ENCODE measurements at regions of chr16 and their contacts with region 1.

Region 1: DNA sequence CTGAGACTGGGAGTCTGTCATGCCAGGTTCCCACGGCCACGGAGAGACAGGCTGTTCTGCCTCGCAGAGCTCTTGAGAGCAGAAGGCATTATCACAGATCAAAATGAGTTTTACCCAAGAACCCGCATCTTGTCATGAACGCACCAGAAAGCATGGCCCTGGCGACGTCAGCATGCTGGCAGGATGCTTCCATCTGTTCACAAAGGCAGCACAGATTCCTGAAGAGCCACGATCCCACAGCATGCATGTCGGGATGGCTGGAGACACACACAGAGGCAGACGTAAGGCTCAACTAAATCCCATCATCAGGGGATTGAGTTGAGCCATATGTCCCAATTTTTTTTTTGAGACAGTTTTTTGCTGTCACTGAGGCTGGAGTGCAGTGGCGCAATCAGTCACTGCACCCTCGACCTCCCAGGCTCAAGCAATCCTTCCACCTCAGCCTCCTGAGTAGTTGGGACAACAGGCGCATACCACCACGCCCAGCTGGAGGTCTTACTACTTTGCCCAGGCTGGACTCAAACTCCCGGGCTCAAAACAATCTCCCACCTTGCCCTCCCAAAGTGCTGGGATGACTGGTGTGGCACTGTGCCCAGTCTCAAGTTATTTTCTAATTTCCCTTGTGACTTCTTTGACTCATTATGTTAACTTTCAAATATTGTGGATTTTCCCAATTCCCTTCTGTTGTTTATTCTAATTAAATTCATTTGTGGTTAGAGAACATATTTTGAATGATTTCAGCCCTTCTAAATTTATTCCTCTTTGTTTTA is 11.1 kb downstream of the FANCA start:
- DNase-seq: no peak
- ATAC-seq: no peak; the same call in 2 of the 3 replicates
- H3K4me3 ChIP-seq: no peak overlapping the region
- H3K27ac ChIP-seq: no peak overlapping the region
- H3K4me1 ChIP-seq: peaks cover 0 to 6% of the 10 kb centered on the region in 2 experiments; a peak in 3 of 5 replicates
- H3K27me3 ChIP-seq: no peaks in the 10 kb centered on the region
- CTCF ChIP-seq: no peak
- EP300 ChIP-seq: no peak
- POLR2A ChIP-seq: no peak
- RAD21 ChIP-seq: no peak

Region 2: DNA sequence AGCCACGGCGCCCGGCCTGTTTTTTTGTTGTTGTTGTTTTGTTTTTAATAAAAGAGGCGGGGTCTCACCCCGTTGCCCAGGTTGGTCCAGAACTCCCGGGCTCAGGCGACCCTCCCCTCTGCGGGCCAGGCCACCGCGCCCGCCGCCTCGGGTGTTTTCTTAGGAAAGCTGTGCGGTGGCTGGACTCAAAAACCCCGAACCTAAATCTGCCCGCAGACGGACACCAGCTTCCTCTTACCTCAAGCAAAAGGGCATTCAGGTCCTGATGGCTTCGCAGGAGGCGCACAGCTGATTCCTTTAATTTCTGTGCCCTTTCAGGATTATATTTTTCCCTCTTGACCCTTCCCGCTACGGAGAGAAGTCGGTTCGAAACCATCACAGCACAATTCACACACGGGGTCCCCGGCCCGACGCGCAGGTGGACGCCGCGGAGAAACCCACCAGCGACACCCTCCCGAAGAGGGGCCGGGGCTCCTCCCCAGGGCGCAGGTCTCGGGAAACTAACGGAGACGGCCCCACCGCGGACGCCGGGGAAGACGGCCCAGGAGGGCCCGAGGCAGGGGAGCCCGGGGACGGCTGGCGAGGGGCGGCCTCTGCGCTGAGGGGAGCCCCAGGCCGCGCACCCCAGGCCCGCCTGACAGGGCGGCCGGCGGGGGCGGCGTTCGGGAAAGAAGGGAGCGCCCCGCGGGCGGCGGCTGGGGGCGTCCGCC is 10.5 kb after region 1 on chr16:
- CTCF ChIA-PET with region 1: no interaction called
- POLR2A ChIA-PET with region 1: interaction called, 10 read pairs
- in situ Hi-C with region 1: no loop called
- intact Hi-C with region 1: no loop called
- DNase-seq: peak in 2 of 4 experiments; percentile 36 to 47
- ATAC-seq: peak; percentile 3
- H3K4me3 ChIP-seq: peak overlapping the region; percentile 75
- H3K27ac ChIP-seq: peak overlapping the region; percentile 85
- H3K4me1 ChIP-seq: peaks cover 11 to 41% of the 10 kb centered on the region in 2 experiments; a peak in 4 of 5 replicates
- H3K27me3 ChIP-seq: no peaks in the 10 kb centered on the region
- CTCF ChIP-seq: no peak
- EP300 ChIP-seq: no peak
- POLR2A ChIP-seq: no peak
- RAD21 ChIP-seq: no peak

Region 3: GRCh38 chr16:89873972-89874689 is 68.8 kb after region 1 on chr16:
- CTCF ChIA-PET with region 1: no interaction called
- POLR2A ChIA-PET with region 1: interaction called, 3 read pairs
- in situ Hi-C with region 1: loop called (anchors 5 kb)
- intact Hi-C with region 1: no loop called
- DNase-seq: peak; percentile 95 to 98 (median 96)
- ATAC-seq: peak; percentile 88
- H3K4me3 ChIP-seq: peak overlapping the region; percentile 80
- H3K27ac ChIP-seq: peak overlapping the region; percentile 97
- H3K4me1 ChIP-seq: peaks cover 11 to 34% of the 10 kb centered on the region in 2 experiments
- H3K27me3 ChIP-seq: no peaks in the 10 kb centered on the region
- CTCF ChIP-seq: no peak
- EP300 ChIP-seq: no peak
- POLR2A ChIP-seq: no peak
- RAD21 ChIP-seq: no peak

Measured in K562 (cell line).